ENCODE measurements at regions of chr21 and their contacts with region 1.

Region 1: DNA sequence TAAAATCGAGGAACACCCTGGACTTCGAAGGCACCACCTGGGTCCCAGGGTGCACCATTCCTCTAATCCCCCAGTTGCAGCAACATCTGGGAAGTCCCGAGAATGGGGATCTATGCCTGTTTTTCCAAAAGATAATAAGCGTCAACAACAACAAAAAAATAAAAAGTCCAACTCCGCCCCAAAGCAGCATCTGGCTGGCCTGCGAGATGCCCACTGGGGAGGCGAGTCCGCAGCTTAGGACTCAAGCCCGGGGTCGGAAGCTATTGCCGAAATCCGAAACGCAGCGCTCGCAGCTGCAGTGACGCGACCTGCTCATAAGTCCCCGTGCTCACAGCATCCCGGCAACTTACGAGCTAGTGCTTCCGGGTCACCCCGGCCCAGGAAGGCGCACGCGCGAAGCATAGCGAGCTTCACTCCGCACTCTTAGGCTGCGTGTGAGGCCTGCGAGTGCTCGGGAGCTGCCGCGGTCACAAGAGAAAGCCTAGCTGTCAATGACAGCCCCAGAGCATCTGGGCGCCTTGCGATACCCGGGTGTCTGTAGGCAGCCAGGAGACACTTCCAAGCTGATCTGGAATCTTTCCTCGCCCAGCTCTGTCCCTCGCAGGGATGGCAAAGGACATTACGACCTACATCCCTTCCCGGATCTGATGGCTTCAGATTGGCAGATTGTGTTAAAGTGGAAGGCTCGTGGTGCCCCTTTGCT is 9.9 kb upstream of the LTN1 start:
- DNase-seq: peak; percentile 96 to 98
- ATAC-seq: peak; percentile 100
- H3K4me3 ChIP-seq: peak overlapping the region; percentile 87
- H3K27ac ChIP-seq: peak overlapping the region; percentile 99
- H3K4me1 ChIP-seq: peaks cover 5% of the 10 kb centered on the region
- H3K27me3 ChIP-seq: no peaks in the 10 kb centered on the region
- CTCF ChIP-seq: no peak

Region 2: GRCh38 chr21:29018540-29018939 is 15.9 kb after region 1 on chr21:
- intact Hi-C with region 1: loop called in 1 of 2 experiments (anchors 1 kb)
- DNase-seq: no peak
- ATAC-seq: peak; percentile 29 to 63 (median 41)
- H3K4me3 ChIP-seq: peak overlapping the region; percentile 94
- H3K27ac ChIP-seq: peak overlapping the region; percentile 90
- H3K4me1 ChIP-seq: no peaks in the 10 kb centered on the region
- H3K27me3 ChIP-seq: no peaks in the 10 kb centered on the region
- CTCF ChIP-seq: no peak

Measured in psoas muscle (tissue), 8 donors.